PC-3 (cell line): ENCODE measurements at regions of chr18 and their contacts with region 1.

Region 1: DNA sequence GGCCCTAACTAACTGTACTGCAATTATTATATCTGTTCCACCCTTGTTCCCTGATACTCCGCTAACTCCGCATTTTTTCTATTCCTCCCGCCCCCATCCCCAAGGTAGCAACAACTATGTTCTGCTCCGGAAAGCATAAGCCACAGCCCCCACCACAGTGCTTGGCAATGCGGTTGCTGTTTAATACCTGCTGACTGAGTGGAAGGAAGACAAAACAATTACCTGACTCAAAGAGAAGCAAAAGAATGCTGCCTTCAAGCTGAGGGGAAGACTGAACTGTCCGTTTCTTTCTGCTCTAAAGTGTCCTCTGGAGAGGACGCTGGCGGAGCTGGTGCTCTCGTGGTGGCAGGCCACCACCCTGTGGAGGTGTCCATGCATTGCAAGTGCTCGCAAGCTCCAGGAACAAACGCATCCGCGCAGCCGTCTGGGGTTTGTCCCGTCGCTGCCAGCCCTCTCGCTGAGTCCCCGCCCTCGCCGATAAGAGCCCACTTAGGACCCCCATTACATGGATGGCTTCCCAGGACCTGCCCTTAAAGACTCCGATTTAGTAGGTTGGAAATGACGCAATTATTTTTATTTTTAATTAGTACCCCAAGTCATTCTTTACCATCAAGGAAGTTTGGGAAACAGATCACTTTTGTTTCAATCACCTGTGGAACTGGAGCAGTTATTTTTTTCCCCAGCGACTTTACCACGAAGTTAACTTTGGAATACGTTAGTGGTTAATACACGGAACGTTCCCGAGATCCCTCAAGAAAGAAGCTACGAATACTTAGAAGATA is 1.6 kb upstream of the MYL12A start:
- DNase-seq: peak; percentile 94
- ATAC-seq: peak; percentile 58
- H3K4me3 ChIP-seq: peak overlapping the region; percentile 92
- H3K27ac ChIP-seq: peak overlapping the region; percentile 79
- H3K4me1 ChIP-seq: peaks cover 27% of the 10 kb centered on the region
- H3K27me3 ChIP-seq: no peaks in the 10 kb centered on the region
- CTCF ChIP-seq: peak; percentile 97

Region 2: DNA sequence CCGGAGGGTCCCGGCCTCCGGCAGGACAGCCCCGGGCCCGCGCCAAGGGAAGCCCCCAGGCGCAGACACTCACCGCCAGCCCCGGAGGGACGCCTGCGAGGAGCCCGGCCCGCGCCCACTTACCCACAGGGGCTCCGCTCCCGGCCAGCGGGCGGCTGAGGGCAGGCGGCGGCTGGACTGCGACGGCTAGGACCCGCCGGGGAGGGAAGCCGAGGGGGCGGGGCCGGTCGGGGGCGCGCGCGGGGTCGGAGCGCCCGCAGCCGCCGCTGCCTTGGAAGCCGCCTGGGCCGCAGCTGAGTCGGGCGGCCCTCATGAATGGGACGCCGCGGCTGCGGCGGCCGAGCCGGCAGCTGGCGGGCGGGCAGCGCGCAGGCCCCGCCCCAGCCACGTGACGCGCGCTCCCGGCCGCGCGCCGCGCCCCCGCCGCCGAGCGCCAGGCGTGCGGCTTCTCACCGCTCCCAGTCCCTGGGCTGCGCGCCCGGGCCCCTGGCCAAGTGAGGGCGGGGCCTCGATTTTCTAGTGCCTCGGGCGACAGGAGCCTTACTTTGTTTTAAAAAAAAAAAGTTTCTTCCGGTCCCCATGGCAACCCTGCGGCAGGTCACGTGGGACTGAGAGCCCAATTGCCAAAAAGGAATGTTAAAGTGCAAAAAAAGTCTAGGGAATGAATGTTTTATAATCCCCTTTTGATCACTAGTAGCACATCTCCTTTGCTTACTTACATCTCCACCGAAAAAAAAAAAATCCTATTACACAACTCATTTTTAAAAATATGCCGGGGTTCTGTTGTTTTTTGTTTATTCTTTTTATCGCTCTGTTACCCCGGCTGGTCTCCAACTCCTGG is 232.9 kb before region 1 on chr18 and contains the start of gene LPIN2:
- CTCF ChIA-PET with region 1: no interaction called
- POLR2A ChIA-PET with region 1: interaction called, 4 read pairs
- intact Hi-C with region 1: loop called (anchors 1 kb)
- DNase-seq: peak; percentile 99
- ATAC-seq: peak; percentile 70
- H3K4me3 ChIP-seq: peak within 1 kb of the TSS; percentile 84
- H3K27ac ChIP-seq: no peak within 1 kb of the TSS
- H3K4me1 ChIP-seq: peaks cover 39% of the 10 kb centered on the region
- H3K27me3 ChIP-seq: no peaks in the 10 kb centered on the region
- CTCF ChIP-seq: no peak
- total RNA-seq, gene LPIN2: 9.8 and 10.7 TPM in 2 replicates

Region 3: GRCh38 chr18:3119401-3120335 is 126.4 kb before region 1 on chr18:
- CTCF ChIA-PET with region 1: interaction called, 3 read pairs
- POLR2A ChIA-PET with region 1: no interaction called
- intact Hi-C with region 1: loop called (anchors 1 kb)
- DNase-seq: peak; percentile 84
- ATAC-seq: peak; percentile 50
- H3K4me3 ChIP-seq: no peak overlapping the region
- H3K27ac ChIP-seq: peak overlapping the region; percentile 38
- H3K4me1 ChIP-seq: peaks cover 50% of the 10 kb centered on the region
- H3K27me3 ChIP-seq: no peaks in the 10 kb centered on the region
- CTCF ChIP-seq: no peak

Region 4: GRCh38 chr18:3151399-3152264 is 94.4 kb before region 1 on chr18:
- CTCF ChIA-PET with region 1: interaction called, 27 read pairs
- POLR2A ChIA-PET with region 1: interaction called, 4 read pairs
- intact Hi-C with region 1: loop called (anchors 1 kb)
- DNase-seq: peak; percentile 59
- ATAC-seq: no peak
- H3K4me3 ChIP-seq: peak overlapping the region; percentile 50; the same call in 1 of the 2 replicates
- H3K27ac ChIP-seq: no peak overlapping the region
- H3K4me1 ChIP-seq: no peaks in the 10 kb centered on the region
- H3K27me3 ChIP-seq: no peaks in the 10 kb centered on the region
- CTCF ChIP-seq: peak; percentile 74

Region 5: DNA sequence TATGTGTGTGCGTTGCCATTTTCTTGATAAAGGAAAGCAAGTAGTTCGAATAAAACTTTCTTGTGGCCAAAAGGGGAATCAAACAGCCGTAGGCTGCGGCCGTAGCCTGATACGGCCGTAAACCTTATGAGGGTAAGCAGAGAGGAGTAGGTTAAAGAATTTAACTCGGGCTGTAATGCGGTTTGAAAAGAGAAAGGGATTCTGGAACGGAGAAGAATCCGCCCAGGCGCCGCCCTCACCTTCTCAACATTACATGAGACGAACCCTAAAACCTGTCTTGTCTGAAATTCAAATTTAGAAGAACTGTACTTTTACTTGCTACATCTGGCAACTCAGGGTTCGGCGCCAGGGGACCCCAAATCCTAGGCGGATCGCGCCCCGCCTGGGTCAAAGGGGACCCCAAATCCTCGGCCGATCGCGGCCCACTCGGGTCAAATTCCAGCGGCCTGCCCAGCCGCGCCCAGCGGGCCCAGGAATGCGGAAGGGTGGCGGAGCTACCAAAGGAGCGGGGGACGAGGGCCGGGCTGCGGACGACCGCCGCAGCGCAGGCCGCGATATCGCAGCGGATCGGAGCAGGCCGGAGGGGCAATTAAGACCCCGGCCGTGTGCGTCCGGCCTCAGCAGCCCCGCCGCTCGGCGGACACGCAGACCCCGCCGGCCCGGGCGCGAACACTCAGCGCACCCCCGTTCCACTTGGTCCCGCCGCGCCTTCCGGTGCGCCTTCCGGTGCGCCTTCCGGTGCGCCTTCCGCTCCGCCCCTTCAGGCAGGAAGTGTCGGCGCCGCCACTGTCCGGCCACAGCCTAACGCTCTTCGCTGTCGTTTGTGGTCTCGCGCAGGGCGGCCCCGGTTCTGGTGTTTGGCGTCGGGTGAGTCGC is 15.6 kb after region 1 on chr18 and contains the start of gene MYL12B:
- CTCF ChIA-PET with region 1: interaction called, 5 read pairs
- POLR2A ChIA-PET with region 1: interaction called, 10 read pairs
- intact Hi-C with region 1: loop called (anchors 1 kb)
- DNase-seq: peak; percentile 83
- ATAC-seq: peak; percentile 66
- H3K4me3 ChIP-seq: peak within 1 kb of the TSS; percentile 86
- H3K27ac ChIP-seq: peak within 1 kb of the TSS; percentile 87
- H3K4me1 ChIP-seq: peaks cover 51% of the 10 kb centered on the region
- H3K27me3 ChIP-seq: no peaks in the 10 kb centered on the region
- CTCF ChIP-seq: no peak
- total RNA-seq, gene MYL12B: 233 and 308 TPM in 2 replicates

Region 6: DNA sequence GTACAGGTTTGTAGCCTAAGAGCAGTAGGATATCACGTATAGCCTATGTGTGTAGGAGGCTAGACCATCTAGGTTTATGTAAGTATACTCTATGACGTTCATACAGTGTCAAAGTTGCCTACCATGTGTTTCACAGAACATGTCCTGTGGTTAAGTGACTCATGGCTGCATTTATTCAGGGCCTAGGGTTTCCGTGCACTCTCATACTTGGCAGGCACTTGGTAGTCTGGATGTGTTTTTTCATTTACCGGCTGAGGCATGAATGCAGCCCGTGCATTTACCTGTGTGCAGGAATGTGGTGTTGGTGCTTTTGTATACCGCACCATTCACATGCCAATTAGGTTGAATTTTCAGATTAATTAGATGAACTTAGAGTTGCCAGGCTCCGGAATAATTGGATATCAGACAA is 59.3 kb after region 1 on chr18:
- CTCF ChIA-PET with region 1: no interaction called
- POLR2A ChIA-PET with region 1: no interaction called
- intact Hi-C with region 1: no loop called
- DNase-seq: peak; percentile 95
- ATAC-seq: peak; percentile 100
- H3K4me3 ChIP-seq: no peak overlapping the region
- H3K27ac ChIP-seq: peak overlapping the region; percentile 57
- H3K4me1 ChIP-seq: peaks cover 16% of the 10 kb centered on the region
- H3K27me3 ChIP-seq: no peaks in the 10 kb centered on the region
- CTCF ChIP-seq: no peak